Thyroid gland (tissue), 4 donors: ENCODE measurements at regions of chr13 and their contacts with region 1.

Region 1: GRCh38 chr13:29923554-29924481 is 73.4 kb upstream of the UBL3 start:
- DNase-seq: peak; percentile 92
- H3K4me3 ChIP-seq: no peak overlapping the region
- H3K27ac ChIP-seq: peak overlapping the region; percentile 90 to 99 (median 99)
- H3K4me1 ChIP-seq: peaks cover 42% of the 10 kb centered on the region in 2 donors
- H3K27me3 ChIP-seq: no peaks in the 10 kb centered on the region
- CTCF ChIP-seq: peak; percentile 54 to 89 (median 80)
- POLR2A ChIP-seq: peak in 1 of 2 donors; percentile 50

Region 2: GRCh38 chr13:29721766-29722165 is 202.1 kb before region 1 on chr13:
- intact Hi-C with region 1: no loop called
- DNase-seq: no peak
- H3K4me3 ChIP-seq: no peak overlapping the region
- H3K27ac ChIP-seq: no peak overlapping the region
- H3K4me1 ChIP-seq: no peaks in the 10 kb centered on the region
- H3K27me3 ChIP-seq: no peaks in the 10 kb centered on the region
- CTCF ChIP-seq: no peak
- POLR2A ChIP-seq: no peak

Region 3: DNA sequence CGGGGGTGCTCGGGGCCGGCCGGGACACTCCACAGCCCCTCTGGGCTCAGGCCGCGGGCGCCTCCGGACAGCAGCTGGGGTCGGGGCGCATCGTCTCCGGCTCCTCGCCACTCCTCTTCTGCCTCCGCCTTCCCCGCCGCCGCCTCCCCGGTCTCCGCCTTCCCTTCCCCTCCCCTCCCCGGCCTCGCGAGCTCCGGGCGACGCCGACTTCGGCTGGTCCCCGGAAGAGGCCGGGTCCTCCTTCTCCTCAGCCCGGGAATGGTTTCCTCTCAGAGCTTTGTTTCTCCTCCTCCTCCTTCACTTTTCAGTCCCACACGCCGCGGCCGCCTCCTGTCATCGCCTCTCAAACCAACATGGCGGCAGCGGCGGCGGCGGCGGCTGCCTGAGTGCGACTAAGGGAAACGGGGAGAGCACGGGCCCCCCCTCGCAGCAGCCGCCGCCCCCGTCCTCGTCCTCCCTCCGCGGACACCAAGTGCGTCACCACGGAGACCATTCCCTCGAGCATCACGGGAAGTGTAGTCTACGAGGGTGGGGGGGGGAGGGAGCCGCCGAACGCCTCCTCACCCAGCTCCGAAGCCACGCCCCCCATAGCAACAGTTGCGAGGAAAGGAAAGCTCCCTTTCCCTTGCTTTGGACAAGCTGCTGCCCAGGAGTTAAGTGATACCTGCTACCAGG is 73.5 kb before region 1 on chr13 and contains the start of gene UBL3:
- intact Hi-C with region 1: loop called (anchors 10 kb)
- DNase-seq: peak; percentile 98
- H3K4me3 ChIP-seq: peak within 1 kb of the TSS; percentile 38 to 77 (median 54)
- H3K27ac ChIP-seq: peak within 1 kb of the TSS; percentile 99 to 100 (median 99)
- H3K4me1 ChIP-seq: peaks cover 0 to 11% of the 10 kb centered on the region in 2 donors
- H3K27me3 ChIP-seq: no peaks in the 10 kb centered on the region
- CTCF ChIP-seq: peak in 1 of 6 experiments; percentile 7
- POLR2A ChIP-seq: peak in 1 of 2 donors; percentile 92
- total RNA-seq, gene UBL3: 59.0 to 79.0 (median 65.1) TPM

Region 4: DNA sequence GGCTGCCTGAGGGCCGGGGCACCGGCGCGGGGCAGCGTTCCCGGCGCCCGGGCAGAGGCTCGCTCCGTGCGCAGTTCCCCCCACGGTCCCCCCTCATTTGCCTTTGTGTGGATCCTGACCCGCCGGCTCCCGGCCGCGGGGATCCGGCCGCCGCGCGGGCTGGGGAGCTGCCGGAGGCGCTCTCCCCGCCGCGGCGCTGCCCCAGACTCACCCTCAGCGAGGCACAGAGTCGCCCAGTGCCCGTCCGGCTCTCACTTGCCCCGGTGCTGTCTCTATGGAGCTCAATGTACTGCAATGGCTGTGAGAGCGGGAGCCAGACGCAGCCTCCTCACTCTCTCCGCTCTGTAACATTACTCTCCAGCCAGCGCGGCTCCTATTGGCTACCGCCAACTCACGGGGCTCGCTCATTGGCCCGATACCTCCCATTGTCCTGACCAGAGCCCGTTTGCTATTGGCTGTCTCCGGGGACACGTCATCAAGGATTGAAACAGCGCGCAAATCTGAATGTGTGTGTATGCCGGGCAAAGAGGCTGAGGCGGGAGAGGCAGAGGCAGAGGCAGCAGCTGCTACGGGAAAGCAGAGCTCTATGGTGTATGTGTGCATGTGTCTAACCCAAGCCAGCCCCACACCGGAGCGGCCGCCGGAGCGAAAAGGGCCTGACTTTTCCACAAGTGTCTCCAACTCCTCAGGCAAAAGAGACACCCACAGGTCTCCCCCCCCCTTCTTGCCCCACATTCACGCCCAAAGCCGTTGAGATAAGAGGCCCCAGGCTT is 542.0 kb after region 1 on chr13 and contains the start of gene HMGB1:
- intact Hi-C with region 1: no loop called
- DNase-seq: peak; percentile 98 to 99
- H3K4me3 ChIP-seq: peak within 1 kb of the TSS; percentile 58 to 90 (median 59)
- H3K27ac ChIP-seq: peak within 1 kb of the TSS; percentile 93 to 100 (median 99)
- H3K4me1 ChIP-seq: peaks cover 16 to 25% of the 10 kb centered on the region in 2 donors
- H3K27me3 ChIP-seq: no peaks in the 10 kb centered on the region
- CTCF ChIP-seq: peak in 1 of 6 experiments; percentile 5
- POLR2A ChIP-seq: peak; percentile 94 to 99
- total RNA-seq, gene HMGB1: 255 to 467 (median 327) TPM